Gastrocnemius medialis (tissue), 4 donors: ENCODE measurements at regions of chr3 and their contacts with region 1.

Region 1: GRCh38 chr3:113626503-113627371 is 69.7 kb downstream of the USF3 start:
- DNase-seq: peak; percentile 38 to 64
- ATAC-seq: peak; percentile 72 to 76
- H3K4me3 ChIP-seq: peak overlapping the region in 3 of 4 donors; percentile 2 to 16 (median 9)
- H3K27ac ChIP-seq: peak overlapping the region; percentile 59 to 65 (median 61)
- H3K4me1 ChIP-seq: peaks cover 34 to 51% of the 10 kb centered on the region in 2 donors
- H3K27me3 ChIP-seq: no peaks in the 10 kb centered on the region
- CTCF ChIP-seq: peak; percentile 79 to 97 (median 89)
- POLR2A ChIP-seq: no peak

Region 2: DNA sequence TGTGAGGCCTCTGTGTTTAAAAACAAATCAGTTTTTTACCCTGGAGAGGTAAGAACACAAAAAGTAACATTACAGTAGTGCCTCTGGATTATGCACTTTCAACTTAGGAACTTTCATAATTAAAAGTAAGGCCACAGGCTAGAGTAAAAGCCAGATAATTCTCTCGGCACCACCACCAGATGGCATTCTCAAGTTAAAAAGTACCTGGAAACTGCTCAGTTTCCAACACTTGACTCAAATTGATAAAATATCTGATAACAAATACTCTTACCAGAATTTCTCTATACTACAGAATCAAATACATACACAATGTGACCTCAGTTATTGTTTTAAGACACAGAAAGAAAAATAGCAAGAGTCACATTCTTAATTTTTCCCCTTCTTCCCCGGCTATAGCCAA is 131.7 kb before region 1 on chr3:
- in situ Hi-C with region 1: loop called in 2 of 4 experiments (anchors 5 kb)
- intact Hi-C with region 1: loop called (anchors 1 kb)
- DNase-seq: peak in 1 of 2 donors; percentile 21
- ATAC-seq: peak; percentile 55 to 60
- H3K4me3 ChIP-seq: no peak overlapping the region
- H3K27ac ChIP-seq: peak overlapping the region in 1 of 4 donors; percentile 11
- H3K4me1 ChIP-seq: no peaks in the 10 kb centered on the region
- H3K27me3 ChIP-seq: no peaks in the 10 kb centered on the region
- CTCF ChIP-seq: peak in 4 of 5 experiments; percentile 4 to 52 (median 42)
- POLR2A ChIP-seq: no peak

Region 3: GRCh38 chr3:113501597-113501996 is 125.1 kb before region 1 on chr3:
- in situ Hi-C with region 1: loop called in 1 of 4 experiments (anchors 5 kb)
- intact Hi-C with region 1: no loop called
- DNase-seq: no peak
- ATAC-seq: no peak
- H3K4me3 ChIP-seq: no peak overlapping the region
- H3K27ac ChIP-seq: no peak overlapping the region
- H3K4me1 ChIP-seq: no peaks in the 10 kb centered on the region
- H3K27me3 ChIP-seq: no peaks in the 10 kb centered on the region
- CTCF ChIP-seq: no peak
- POLR2A ChIP-seq: no peak

Region 4: DNA sequence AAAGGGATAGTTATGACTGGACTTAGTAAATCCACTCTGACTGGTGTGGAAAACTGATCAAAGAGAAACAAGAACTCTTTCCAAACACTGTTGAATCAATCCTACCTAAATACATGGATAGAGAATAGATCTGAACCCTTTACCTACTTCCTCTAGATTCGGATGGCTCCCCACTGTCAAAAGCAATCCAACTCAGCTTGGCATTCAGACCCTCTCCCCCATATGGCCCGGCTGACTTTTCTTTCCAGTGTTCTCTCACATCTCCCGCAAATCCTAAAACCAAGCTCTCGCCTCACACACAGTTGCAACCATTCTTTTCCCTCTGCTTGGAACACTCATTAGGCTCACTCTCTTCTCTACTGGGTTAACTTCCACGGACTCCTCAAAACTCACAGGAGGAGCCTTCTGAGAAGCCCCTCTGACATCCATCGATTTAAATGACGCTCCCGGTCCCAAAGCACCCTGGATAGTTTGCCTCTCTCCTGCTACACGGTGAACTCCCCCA is 112.4 kb before region 1 on chr3:
- in situ Hi-C with region 1: no loop called
- intact Hi-C with region 1: loop called (anchors 5 kb)
- DNase-seq: no peak
- ATAC-seq: peak; percentile 20 to 37
- H3K4me3 ChIP-seq: peak overlapping the region; percentile 83 to 94 (median 90)
- H3K27ac ChIP-seq: peak overlapping the region; percentile 81 to 89 (median 86)
- H3K4me1 ChIP-seq: peaks cover 8 to 9% of the 10 kb centered on the region in 2 donors
- H3K27me3 ChIP-seq: peaks cover 0 to 3% (median 0%) of the 10 kb centered on the region in 3 donors
- CTCF ChIP-seq: no peak
- POLR2A ChIP-seq: no peak

Region 5: DNA sequence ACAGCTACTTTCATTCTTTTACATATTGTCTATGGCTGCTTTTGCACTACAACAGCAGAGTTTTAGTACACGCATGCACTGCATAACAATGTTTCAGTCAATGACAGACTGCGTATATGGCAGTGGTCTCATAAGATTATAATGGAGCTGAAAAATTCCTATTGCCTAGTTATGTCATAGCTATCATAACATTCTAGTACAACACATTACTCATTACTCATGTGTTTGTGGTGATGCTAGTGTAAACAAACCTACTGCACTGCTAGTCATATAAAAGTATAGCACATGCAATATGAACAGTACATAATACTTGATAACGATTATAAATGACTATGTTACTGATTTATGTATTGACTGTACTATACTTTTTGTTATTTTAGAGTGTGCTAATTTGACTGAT is 477.7 kb after region 1 on chr3:
- in situ Hi-C with region 1: no loop called
- intact Hi-C with region 1: no loop called
- DNase-seq: no peak
- ATAC-seq: no peak
- H3K4me3 ChIP-seq: no peak overlapping the region
- H3K27ac ChIP-seq: no peak overlapping the region
- H3K4me1 ChIP-seq: no peaks in the 10 kb centered on the region
- H3K27me3 ChIP-seq: no peaks in the 10 kb centered on the region
- CTCF ChIP-seq: no peak
- POLR2A ChIP-seq: no peak